ENCODE measurements at regions of chr1 and their contacts with region 1.

Region 1: GRCh38 chr1:234170622-234171021 is 202.6 kb upstream of the COA6 start:
- DNase-seq: no peak
- H3K4me3 ChIP-seq: no peak overlapping the region
- H3K27ac ChIP-seq: no peak overlapping the region
- H3K4me1 ChIP-seq: no peaks in the 10 kb centered on the region
- H3K27me3 ChIP-seq: no peaks in the 10 kb centered on the region
- CTCF ChIP-seq: no peak
- POLR2A ChIP-seq: no peak

Region 2: GRCh38 chr1:234373064-234373958 is 202.7 kb after region 1 on chr1 and contains the start of gene COA6:
- intact Hi-C with region 1: no loop called
- DNase-seq: peak; percentile 94 to 96
- H3K4me3 ChIP-seq: peak within 1 kb of the TSS; percentile 57 to 68
- H3K27ac ChIP-seq: peak within 1 kb of the TSS; percentile 90
- H3K4me1 ChIP-seq: peaks cover 36% of the 10 kb centered on the region
- H3K27me3 ChIP-seq: no peaks in the 10 kb centered on the region
- CTCF ChIP-seq: peak in 1 of 3 experiments; percentile 10
- POLR2A ChIP-seq: peak in 1 of 2 donors; percentile 64
- total RNA-seq, gene COA6: 15.7 TPM

Region 3: GRCh38 chr1:235617808-235618207 is 1447.2 kb after region 1 on chr1:
- intact Hi-C with region 1: loop called (anchors 10 kb)
- DNase-seq: no peak
- H3K4me3 ChIP-seq: no peak overlapping the region
- H3K27ac ChIP-seq: no peak overlapping the region
- H3K4me1 ChIP-seq: no peaks in the 10 kb centered on the region
- H3K27me3 ChIP-seq: no peaks in the 10 kb centered on the region
- CTCF ChIP-seq: no peak
- POLR2A ChIP-seq: no peak

Measured in vagina (tissue), 2 donors.